Activated CD4-positive, alpha-beta T cell treated with anti-CD3 and anti-CD28 coated beads for 36 hours (primary cell): ENCODE measurements at regions of chr6 and their contacts with region 1.

Region 1: GRCh38 chr6:43769526-43770416 is at the start of gene VEGFA:
- DNase-seq: peak; percentile 95
- ATAC-seq: peak; percentile 74
- H3K4me3 Mint-ChIP-seq: peak within 1 kb of the TSS; percentile 96
- H3K27ac Mint-ChIP-seq: peak within 1 kb of the TSS; percentile 91
- H3K4me1 Mint-ChIP-seq: peaks cover 18% of the 10 kb centered on the region
- H3K27me3 Mint-ChIP-seq: peaks cover 4% of the 10 kb centered on the region
- total RNA-seq, gene VEGFA: 64.6 to 72.8 TPM

Region 2: DNA sequence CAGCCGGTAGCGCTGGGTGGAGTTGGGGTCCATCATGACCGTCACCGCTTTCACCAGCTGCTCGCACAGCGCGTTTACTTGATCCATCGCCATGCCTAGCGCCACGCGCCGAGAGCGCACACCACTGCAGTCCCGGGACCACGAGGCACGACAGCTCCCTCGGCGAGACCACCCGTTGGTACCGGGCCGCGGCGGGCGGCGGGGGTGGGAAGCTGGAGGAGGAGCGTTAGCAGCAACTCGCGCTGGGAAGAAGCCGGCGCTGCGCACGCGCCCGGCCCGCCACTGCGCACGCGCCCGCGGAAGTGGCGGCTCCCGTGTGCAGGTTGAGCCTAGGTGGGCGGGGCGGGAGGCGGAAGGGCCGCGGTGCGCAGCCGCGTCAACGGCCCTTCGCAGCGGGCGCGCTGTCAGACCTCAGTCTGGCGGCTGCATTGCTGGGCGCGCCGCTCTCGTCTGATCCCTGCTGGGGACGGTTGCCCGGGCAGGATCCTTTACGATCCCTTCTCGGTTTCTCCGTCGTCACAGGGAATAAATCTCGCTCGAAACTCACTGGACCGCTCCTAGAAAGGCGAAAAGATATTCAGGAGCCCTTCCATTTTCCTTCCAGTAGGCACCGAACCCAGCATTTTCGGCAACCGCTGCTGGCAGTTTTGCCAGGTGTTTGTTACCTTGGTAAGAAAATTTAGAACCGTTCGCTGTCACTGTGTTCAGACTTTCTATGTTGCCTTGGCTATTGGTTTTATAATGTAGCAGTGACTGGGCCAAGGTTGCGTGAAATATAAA is 193.8 kb before region 1 on chr6 and contains the starts of genes POLH and XPO5:
- CTCF ChIA-PET with region 1: interaction called, 3 read pairs
- POLR2A ChIA-PET with region 1: no interaction called
- intact Hi-C with region 1: loop called in 1 of 2 experiments (anchors 2 kb)
- DNase-seq: peak; percentile 95
- ATAC-seq: peak; percentile 91
- H3K4me3 Mint-ChIP-seq: peak within 1 kb of the TSS; percentile 90
- H3K27ac Mint-ChIP-seq: peak within 1 kb of the TSS; percentile 86
- H3K4me1 Mint-ChIP-seq: peaks cover 44% of the 10 kb centered on the region
- H3K27me3 Mint-ChIP-seq: no peaks in the 10 kb centered on the region
- total RNA-seq, gene POLH: 35.2 to 37.9 TPM
- total RNA-seq, gene XPO5: 108 to 109 TPM

Region 3: DNA sequence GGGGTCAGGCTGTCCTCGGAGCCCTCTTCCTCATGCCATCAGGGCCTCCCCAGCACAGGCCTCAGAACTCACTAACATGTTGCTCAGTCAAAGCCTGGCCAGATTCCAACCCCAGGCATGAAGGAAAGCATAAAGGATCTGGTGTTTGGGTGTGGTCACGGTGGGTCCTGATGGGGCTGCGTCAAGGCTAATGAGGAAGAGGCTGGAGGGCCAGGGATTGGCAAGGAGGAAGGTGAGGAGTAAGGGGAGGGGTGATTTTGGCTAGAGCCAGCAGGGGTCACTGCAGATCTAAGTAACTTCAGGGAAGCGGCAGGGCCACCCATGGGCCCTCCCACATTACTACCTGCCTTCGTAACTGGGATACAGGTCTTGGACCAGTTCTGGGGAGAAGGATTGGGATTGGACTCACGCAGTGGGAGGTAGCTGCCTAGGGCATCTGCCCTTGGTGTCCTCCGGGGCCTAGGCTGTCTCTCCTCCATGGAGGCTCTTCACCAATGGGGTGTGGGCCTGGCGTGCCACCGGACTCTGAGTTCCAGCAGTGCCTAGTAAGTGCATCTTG is 46.0 kb before region 1 on chr6:
- CTCF ChIA-PET with region 1: interaction called, 14 read pairs
- POLR2A ChIA-PET with region 1: interaction called, 10 read pairs
- intact Hi-C with region 1: loop called (anchors 1 to 2 kb)
- DNase-seq: peak; percentile 87
- ATAC-seq: peak; percentile 82
- H3K4me3 Mint-ChIP-seq: no peak overlapping the region
- H3K27ac Mint-ChIP-seq: peak overlapping the region; percentile 90
- H3K4me1 Mint-ChIP-seq: peaks cover 26% of the 10 kb centered on the region
- H3K27me3 Mint-ChIP-seq: no peaks in the 10 kb centered on the region

Region 4: GRCh38 chr6:43951063-43951755 is 181.4 kb after region 1 on chr6:
- CTCF ChIA-PET with region 1: no interaction called
- POLR2A ChIA-PET with region 1: no interaction called
- intact Hi-C with region 1: loop called in 1 of 2 experiments (anchors 1 kb)
- DNase-seq: peak; percentile 45
- ATAC-seq: peak; percentile 33
- H3K4me3 Mint-ChIP-seq: no peak overlapping the region
- H3K27ac Mint-ChIP-seq: no peak overlapping the region
- H3K4me1 Mint-ChIP-seq: no peaks in the 10 kb centered on the region
- H3K27me3 Mint-ChIP-seq: peaks cover under 1% of the 10 kb centered on the region

Region 5: DNA sequence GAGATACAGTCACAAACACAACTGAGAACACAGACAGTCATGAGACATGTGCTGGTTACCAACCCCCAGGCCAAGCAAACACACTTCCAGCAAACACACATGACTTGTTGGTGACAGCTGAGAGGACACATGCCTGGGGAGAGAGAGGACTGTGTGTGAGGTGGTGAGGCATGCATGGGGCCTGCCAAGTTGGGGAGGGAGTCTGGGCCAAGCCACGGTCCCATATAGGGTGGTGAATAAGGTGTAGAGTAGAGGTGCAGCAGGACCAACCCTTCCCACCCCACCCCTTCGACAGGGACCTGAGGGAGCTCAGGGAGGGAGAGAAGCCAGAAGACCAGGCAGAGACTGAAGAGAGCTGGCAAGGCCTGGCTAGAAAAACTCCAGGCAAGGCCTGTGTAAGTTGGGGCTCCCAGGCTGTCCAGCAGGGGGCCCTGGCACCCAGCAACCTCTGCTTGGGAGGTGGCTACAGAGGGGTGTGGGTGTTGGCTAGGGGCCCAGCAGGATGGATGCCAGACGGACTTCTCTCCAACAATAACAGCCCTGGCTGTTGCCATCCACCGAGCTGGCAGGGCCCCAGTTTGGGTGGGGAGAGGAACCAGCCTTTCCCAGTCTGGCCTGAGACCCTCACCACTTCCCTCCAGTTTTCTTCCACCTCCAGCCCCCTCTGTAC is 451.7 kb after region 1 on chr6:
- CTCF ChIA-PET with region 1: no interaction called
- POLR2A ChIA-PET with region 1: no interaction called
- intact Hi-C with region 1: loop called in 1 of 2 experiments (anchors 1 kb)
- DNase-seq: peak; percentile 90
- ATAC-seq: peak; percentile 70
- H3K4me3 Mint-ChIP-seq: peak overlapping the region; percentile 10
- H3K27ac Mint-ChIP-seq: peak overlapping the region; percentile 69
- H3K4me1 Mint-ChIP-seq: peaks cover 48% of the 10 kb centered on the region
- H3K27me3 Mint-ChIP-seq: peaks cover 3% of the 10 kb centered on the region

Region 6: DNA sequence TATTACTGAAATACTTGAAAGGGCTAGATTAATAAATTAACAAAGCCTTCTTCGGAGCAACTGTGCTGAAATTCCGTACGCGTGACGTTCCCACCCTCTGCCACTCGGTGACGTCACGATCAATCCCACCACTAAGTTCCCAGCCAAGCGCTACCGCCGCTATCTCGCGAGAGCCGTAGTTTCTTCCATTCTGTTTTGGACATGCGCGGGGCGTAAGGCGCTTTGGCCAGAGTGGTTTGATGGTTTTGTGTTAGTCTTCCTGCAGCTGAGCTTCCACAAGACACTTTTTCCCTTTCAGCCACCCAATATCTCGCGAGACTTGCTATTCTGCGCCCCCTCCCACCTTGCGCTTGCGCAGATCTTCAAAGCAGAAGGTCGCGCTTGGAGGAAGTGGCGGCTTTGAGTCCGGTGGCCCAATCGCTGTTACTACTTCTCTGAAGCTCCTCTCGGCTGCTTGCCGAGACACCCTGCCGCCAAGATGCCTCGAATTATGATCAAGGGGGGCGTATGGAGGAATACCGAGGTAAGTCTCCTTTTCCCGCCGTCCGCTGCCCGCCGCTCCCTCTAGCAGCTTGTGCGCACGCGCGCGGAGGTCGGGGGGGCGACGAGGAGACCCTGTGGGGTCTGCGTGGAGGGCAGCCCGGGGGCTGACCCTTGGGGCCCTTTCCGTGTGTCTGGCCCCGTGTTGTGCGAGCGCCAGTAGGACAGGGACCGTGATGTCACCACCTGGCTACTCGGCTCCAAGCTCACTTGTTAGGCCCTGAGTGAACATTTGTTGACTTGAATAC is 617.8 kb after region 1 on chr6 and contains the start of gene CDC5L:
- CTCF ChIA-PET with region 1: interaction called, 3 read pairs
- POLR2A ChIA-PET with region 1: no interaction called
- intact Hi-C with region 1: loop called in 1 of 2 experiments (anchors 2 kb)
- DNase-seq: peak; percentile 95
- ATAC-seq: peak; percentile 95
- H3K4me3 Mint-ChIP-seq: peak within 1 kb of the TSS; percentile 97
- H3K27ac Mint-ChIP-seq: peak within 1 kb of the TSS; percentile 98
- H3K4me1 Mint-ChIP-seq: peaks cover 31% of the 10 kb centered on the region
- H3K27me3 Mint-ChIP-seq: no peaks in the 10 kb centered on the region
- total RNA-seq, gene CDC5L: 25.1 to 28.9 TPM